ENCODE measurements at regions of chr11 and their contacts with region 1.

Region 1: DNA sequence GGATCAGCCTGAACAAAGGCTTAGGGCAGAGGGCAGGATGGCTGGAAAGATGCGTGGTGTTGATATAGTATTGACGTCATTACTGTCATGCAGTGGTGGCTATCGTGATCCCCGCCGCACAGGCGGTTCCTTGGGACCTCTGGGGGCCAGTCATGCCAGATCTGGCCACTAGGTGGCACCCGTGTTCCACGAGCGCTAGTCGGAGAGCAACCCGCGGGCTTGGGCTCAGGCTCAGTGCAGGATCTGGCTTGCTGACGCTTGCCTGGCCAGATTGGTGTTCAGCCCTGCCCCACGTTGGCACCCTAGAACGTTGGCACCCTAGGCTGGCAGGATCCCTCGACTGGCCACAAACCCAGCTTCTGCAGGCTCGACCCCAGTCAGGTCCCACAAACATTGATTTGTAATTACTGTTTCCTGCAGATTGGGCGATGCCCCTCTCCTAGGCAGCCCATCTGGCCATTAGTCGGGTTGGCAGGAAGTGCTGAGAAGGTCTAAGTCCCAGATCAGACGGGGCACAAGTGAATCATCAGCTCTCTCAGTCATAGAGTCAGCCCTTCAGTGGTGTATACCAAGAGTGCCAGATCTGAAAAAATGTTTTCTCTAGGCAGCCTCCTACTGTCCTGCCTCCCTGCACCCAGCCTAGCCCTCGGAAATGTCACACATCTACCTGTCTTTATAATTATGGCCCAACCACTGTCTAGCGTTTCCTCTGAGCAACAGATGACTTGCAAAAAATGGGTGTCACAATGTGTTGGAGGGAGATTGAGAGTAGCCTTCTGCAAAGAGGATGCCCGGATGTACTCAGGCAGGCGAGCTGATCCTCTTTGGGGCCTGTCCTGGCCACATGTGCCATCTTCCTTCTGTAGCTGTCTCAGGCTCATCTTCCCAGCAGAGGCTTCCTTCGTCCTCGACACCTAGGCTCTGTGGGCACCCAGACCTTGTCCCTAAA is 315.3 kb downstream of the TMEM135 start:
- DNase-seq: peak; percentile 64
- ATAC-seq: peak; percentile 99
- H3K4me3 ChIP-seq: no peak overlapping the region
- H3K27ac ChIP-seq: no peak overlapping the region
- H3K4me1 ChIP-seq: 0 out of 2 replicates have a peak, but pooled peaks cover 2% of the 10 kb centered on the region
- H3K27me3 ChIP-seq: no peaks in the 10 kb centered on the region; the same call in 1 of the 2 replicates
- CTCF ChIP-seq: peak; percentile 97
- POLR2A ChIP-seq: no peak
- RAD21 ChIP-seq: peak; percentile 98

Region 2: DNA sequence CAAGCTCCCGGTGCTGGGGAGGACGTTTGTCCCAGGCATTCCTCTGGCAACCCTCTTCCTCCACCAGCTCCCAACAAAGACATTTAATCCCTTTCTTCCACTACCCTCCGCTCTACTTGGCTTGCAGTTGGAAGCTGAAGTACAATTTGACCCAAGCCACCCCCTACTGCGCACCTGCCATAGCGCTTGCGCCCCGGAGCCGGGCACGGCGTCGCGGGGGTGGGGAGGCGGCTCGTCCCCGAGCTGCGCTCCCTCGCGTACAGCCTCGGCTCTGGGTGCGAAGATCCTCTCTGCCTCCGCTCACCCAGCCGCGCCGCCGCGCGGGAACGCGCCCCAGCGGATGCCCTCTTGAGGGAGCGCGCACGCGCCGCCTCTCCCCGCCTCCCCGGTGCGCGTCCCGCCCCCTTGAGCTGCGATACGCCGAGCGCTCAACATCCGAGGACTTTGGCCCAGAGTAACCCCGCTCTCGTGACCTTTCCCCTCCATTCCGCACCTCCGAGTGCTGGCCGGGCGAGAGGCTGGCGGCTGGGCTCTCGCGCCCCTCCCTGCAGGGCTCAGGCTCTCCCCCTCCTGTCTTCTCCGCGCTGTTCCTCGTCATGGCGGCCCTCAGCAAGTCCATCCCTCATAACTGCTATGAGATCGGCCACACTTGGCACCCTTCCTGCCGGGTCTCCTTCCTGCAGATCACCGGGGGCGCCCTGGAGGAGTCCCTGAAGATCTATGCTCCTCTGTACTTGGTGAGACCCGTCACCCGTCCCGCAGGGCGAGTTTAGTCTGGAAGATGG is 315.4 kb before region 1 on chr11 and contains the start of gene TMEM135:
- CTCF ChIA-PET with region 1: no interaction called
- POLR2A ChIA-PET with region 1: no interaction called
- dilution Hi-C with region 1: no loop called
- in situ Hi-C with region 1: no loop called
- intact Hi-C with region 1: no loop called
- DNase-seq: peak; percentile 83
- ATAC-seq: peak; percentile 98
- H3K4me3 ChIP-seq: peak within 1 kb of the TSS; percentile 81
- H3K27ac ChIP-seq: peak within 1 kb of the TSS; percentile 71
- H3K4me1 ChIP-seq: peaks cover 2% of the 10 kb centered on the region; the same call in 1 of the 2 replicates
- H3K27me3 ChIP-seq: no peaks in the 10 kb centered on the region
- CTCF ChIP-seq: no peak
- POLR2A ChIP-seq: no peak
- RAD21 ChIP-seq: no peak
- total RNA-seq, gene TMEM135: 5.9 and 6.9 TPM in 2 replicates

Region 3: GRCh38 chr11:87421422-87421821 is 68.4 kb after region 1 on chr11:
- CTCF ChIA-PET with region 1: interaction called, 13 read pairs
- POLR2A ChIA-PET with region 1: no interaction called
- dilution Hi-C with region 1: no loop called
- in situ Hi-C with region 1: loop called (anchors 5 kb)
- intact Hi-C with region 1: loop called (anchors 1 kb)
- DNase-seq: peak; percentile 87
- ATAC-seq: peak; percentile 79
- H3K4me3 ChIP-seq: no peak overlapping the region
- H3K27ac ChIP-seq: no peak overlapping the region
- H3K4me1 ChIP-seq: peaks cover 13% of the 10 kb centered on the region
- H3K27me3 ChIP-seq: no peaks in the 10 kb centered on the region
- CTCF ChIP-seq: peak; percentile 67
- POLR2A ChIP-seq: no peak
- RAD21 ChIP-seq: peak; percentile 63

Region 4: DNA sequence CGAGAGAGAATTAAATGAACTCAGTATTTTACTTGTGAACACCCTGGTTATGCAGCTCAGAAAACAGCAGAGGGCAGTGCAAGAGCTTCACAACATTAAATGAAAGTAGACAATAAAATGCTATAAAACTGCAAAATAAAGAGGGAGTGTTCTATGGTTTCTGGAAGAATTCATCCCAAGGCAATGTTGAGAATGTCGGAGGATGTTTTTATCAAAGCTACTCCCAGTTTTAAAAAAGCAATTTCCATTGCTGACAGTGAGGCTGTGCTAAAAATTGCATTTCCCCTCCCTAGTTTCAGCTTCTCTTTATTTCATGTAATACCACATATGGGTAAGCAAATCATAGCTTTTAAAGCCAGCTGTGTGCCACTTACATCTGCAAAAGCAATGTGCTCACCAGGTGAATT is 525.3 kb after region 1 on chr11:
- CTCF ChIA-PET with region 1: no interaction called
- POLR2A ChIA-PET with region 1: no interaction called
- dilution Hi-C with region 1: no loop called
- in situ Hi-C with region 1: no loop called
- intact Hi-C with region 1: loop called (anchors 2 kb)
- DNase-seq: peak; percentile 57
- ATAC-seq: peak; percentile 72
- H3K4me3 ChIP-seq: no peak overlapping the region
- H3K27ac ChIP-seq: no peak overlapping the region
- H3K4me1 ChIP-seq: no peaks in the 10 kb centered on the region
- H3K27me3 ChIP-seq: no peaks in the 10 kb centered on the region
- CTCF ChIP-seq: peak; percentile 58
- POLR2A ChIP-seq: no peak
- RAD21 ChIP-seq: peak; percentile 57

Region 5: DNA sequence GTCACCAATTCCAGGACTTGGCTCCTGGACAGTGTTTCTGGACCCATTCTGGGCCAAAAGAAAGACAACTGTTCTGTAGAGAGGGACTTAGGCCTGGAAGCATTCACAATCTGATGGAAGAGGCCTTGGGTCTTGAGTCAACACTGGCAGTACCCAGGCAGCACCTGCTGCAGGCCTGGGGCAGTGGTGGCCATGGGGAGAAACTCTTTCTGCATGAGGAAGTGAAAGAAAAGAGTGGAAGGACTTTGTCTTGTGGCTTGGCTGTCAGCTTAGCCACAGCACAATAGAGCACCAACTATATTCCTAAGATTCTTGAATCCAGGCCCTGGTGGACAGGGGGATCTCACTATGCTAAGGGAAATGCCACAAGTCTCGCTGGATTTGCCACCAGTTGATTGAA is 913.9 kb after region 1 on chr11:
- CTCF ChIA-PET with region 1: no interaction called
- POLR2A ChIA-PET with region 1: no interaction called
- dilution Hi-C with region 1: no loop called
- in situ Hi-C with region 1: loop called (anchors 25 kb)
- intact Hi-C with region 1: no loop called
- DNase-seq: no peak
- ATAC-seq: no peak
- H3K4me3 ChIP-seq: no peak overlapping the region
- H3K27ac ChIP-seq: no peak overlapping the region
- H3K4me1 ChIP-seq: no peaks in the 10 kb centered on the region
- H3K27me3 ChIP-seq: no peaks in the 10 kb centered on the region
- CTCF ChIP-seq: no peak
- POLR2A ChIP-seq: no peak
- RAD21 ChIP-seq: no peak

Region 6: DNA sequence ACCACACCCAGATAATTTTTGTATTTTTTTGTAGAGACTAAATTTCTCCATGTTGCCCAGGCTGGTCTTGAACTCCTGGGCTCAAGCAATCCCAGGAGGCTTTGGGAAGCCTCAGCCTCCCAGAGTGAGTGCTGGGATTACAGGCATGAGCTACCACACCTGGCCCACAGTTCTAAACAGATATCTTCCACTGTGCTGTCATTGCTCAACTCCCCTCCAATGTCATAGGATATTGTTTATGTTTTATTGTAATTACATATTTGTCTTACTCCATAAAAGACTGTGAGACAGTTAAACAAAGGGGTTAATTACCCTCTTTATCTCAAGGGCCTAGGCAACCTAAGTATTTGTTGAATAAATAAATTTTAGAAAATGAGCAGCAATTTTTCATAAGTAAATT is 1508.6 kb after region 1 on chr11:
- CTCF ChIA-PET with region 1: no interaction called
- POLR2A ChIA-PET with region 1: no interaction called
- dilution Hi-C with region 1: no loop called
- in situ Hi-C with region 1: loop called (anchors 25 kb)
- intact Hi-C with region 1: no loop called
- DNase-seq: no peak
- ATAC-seq: no peak
- H3K4me3 ChIP-seq: no peak overlapping the region
- H3K27ac ChIP-seq: no peak overlapping the region
- H3K4me1 ChIP-seq: no peaks in the 10 kb centered on the region
- H3K27me3 ChIP-seq: no peaks in the 10 kb centered on the region
- CTCF ChIP-seq: no peak
- POLR2A ChIP-seq: no peak
- RAD21 ChIP-seq: no peak

Measured in IMR-90 (cell line).